CD4-positive, alpha-beta memory T cell (primary cell): ENCODE measurements at regions of chr9 and their contacts with region 1.

Region 1: DNA sequence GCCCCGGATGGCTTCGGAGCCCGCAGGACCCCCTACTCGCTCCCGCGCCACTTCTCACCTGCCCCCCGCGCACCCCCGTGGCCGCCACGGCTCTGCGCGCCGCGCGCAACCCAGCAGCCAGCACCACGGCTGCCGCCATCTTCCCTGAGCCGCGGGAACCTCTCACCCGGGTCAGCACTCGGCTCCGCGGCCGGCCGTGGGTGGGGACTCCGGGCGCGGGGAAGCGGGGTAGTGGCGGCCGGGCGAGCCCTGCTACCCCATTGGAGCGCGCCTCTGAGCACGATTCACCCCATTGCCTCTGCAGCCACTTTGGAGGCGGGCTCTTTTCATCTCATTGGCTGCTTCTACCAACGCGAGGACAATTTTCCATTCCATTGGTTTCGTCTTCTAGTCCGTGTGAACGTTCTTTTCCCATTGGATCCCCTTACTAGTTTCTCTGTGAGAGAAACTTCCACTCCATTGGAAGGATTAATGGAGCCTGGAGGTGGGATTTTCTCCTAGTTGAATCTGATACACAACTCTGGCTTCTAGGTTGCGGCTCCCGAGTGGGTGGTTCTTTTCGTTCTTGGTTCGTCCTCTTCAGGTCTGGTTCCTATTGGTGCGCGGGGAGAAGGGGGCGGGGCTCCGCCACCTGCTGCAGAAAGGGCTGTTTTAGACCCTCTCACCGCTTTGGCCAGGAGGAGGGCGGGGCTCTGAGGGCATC is at the start of gene HINT2:
- DNase-seq: peak; percentile 96 to 99 (median 98)
- H3K4me3 ChIP-seq: peak within 1 kb of the TSS; percentile 95 to 100
- H3K4me3 Mint-ChIP-seq: peak within 1 kb of the TSS; percentile 89 to 98 (median 95)
- H3K27ac ChIP-seq: peak within 1 kb of the TSS; percentile 70
- H3K27ac Mint-ChIP-seq: peak within 1 kb of the TSS; percentile 91 to 98 (median 96)
- H3K4me1 ChIP-seq: peaks cover 34% of the 10 kb centered on the region
- H3K4me1 Mint-ChIP-seq: peaks cover 20 to 50% (median 36%) of the 10 kb centered on the region in 4 donors
- H3K27me3 ChIP-seq: no peaks in the 10 kb centered on the region
- H3K27me3 Mint-ChIP-seq: no peaks in the 10 kb centered on the region
- total RNA-seq, gene HINT2: 22.9 to 30.2 TPM

Region 2: GRCh38 chr9:35071814-35072460 is 743.1 kb before region 1 on chr9:
- CTCF ChIA-PET with region 1: no interaction called
- POLR2A ChIA-PET with region 1: no interaction called
- intact Hi-C with region 1: loop called (anchors 10 kb)
- DNase-seq: peak; percentile 72 to 80 (median 79)
- H3K4me3 ChIP-seq: peak overlapping the region; percentile 82 to 83
- H3K4me3 Mint-ChIP-seq: peak overlapping the region; percentile 81 to 95 (median 92)
- H3K27ac ChIP-seq: peak overlapping the region; percentile 94
- H3K27ac Mint-ChIP-seq: peak overlapping the region; percentile 81 to 100 (median 97)
- H3K4me1 ChIP-seq: peaks cover 52% of the 10 kb centered on the region
- H3K4me1 Mint-ChIP-seq: peaks cover 41 to 59% (median 51%) of the 10 kb centered on the region in 4 donors
- H3K27me3 ChIP-seq: no peaks in the 10 kb centered on the region
- H3K27me3 Mint-ChIP-seq: no peaks in the 10 kb centered on the region

Region 3: DNA sequence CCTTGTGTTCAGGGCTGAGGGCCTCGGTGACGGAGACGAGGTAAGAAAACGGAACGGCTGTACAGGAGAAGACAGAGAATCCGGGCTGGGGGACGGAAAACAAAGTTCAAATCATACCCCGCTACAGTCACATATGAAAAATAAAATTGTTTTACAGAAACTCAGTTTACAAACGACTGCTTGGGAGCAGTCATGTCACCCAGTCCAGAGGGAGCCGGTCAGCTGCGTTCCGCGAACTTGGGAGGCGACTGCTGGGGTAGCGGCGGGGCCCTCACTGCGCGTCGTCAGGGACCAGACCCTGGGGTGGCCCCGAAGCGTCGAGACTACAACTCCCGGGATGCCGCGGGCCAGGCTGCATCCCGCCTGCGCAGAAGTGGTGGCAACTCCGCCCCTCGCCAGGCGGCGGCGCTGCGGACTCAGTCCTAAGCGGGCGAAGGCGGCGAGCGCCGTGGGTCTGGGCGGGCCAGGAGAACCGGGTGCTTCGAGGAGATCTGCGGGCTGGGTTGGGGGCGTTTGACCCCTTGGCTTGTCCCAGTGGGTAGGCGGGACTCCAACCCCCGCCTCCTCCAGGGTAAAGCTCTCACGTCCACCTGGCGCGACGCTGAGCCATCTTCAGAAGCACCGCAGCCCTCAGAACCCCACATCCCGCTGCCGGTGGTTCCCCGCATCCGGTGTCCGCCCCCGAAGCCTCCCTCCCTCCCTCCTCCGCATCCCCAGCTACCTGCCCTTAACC is 168.3 kb before region 1 on chr9:
- CTCF ChIA-PET with region 1: interaction called, 7 read pairs
- POLR2A ChIA-PET with region 1: interaction called, 10 read pairs
- intact Hi-C with region 1: loop called (anchors 1 kb)
- DNase-seq: peak; percentile 91 to 95 (median 91)
- H3K4me3 ChIP-seq: peak overlapping the region; percentile 78 to 96
- H3K4me3 Mint-ChIP-seq: peak overlapping the region; percentile 93 to 98 (median 94)
- H3K27ac ChIP-seq: peak overlapping the region; percentile 88
- H3K27ac Mint-ChIP-seq: peak overlapping the region; percentile 89 to 99 (median 97)
- H3K4me1 ChIP-seq: peaks cover 56% of the 10 kb centered on the region
- H3K4me1 Mint-ChIP-seq: peaks cover 29 to 87% (median 47%) of the 10 kb centered on the region in 4 donors
- H3K27me3 ChIP-seq: no peaks in the 10 kb centered on the region
- H3K27me3 Mint-ChIP-seq: no peaks in the 10 kb centered on the region

Region 4: GRCh38 chr9:35756275-35757225 is 58.4 kb before region 1 on chr9:
- CTCF ChIA-PET with region 1: interaction called, 3 read pairs
- POLR2A ChIA-PET with region 1: interaction called, 12 read pairs
- intact Hi-C with region 1: no loop called
- DNase-seq: peak; percentile 68 to 80 (median 71)
- H3K4me3 ChIP-seq: peak overlapping the region; percentile 62 to 90
- H3K4me3 Mint-ChIP-seq: peak overlapping the region; percentile 97 to 100 (median 98)
- H3K27ac ChIP-seq: peak overlapping the region; percentile 70
- H3K27ac Mint-ChIP-seq: peak overlapping the region; percentile 81 to 99 (median 98)
- H3K4me1 ChIP-seq: peaks cover 22% of the 10 kb centered on the region
- H3K4me1 Mint-ChIP-seq: peaks cover 24 to 67% (median 49%) of the 10 kb centered on the region in 4 donors
- H3K27me3 ChIP-seq: no peaks in the 10 kb centered on the region
- H3K27me3 Mint-ChIP-seq: no peaks in the 10 kb centered on the region

Region 5: DNA sequence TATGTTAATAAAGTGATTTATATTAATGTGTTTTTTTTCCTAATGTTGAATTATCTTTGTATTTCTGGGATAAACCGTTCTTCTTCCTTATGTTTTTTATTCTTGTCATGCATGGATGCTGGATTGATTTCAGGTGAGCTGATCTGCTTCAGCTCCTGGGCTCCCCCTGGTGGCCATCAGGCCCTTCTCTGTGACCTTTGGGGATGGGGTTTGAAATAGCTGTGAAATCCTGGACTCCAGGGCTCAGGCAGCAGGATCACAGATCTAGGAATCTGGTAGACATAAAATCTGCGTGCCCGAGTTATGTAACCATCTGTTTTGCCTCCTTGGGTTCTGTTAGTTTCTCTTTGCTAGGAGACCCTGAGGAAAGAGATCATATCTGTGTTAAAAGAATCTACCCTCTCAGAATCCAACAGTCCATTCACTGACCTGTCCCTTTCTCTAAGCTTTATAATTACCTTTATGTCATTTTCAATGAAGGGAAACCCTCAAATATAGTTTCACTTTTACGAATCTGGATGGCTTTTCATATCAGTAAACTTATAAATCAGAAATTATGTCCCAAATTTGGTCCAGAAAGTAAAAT is 67.4 kb after region 1 on chr9:
- CTCF ChIA-PET with region 1: interaction called, 6 read pairs
- POLR2A ChIA-PET with region 1: interaction called, 4 read pairs
- intact Hi-C with region 1: loop called (anchors 5 kb)
- DNase-seq: peak; percentile 70 to 75 (median 71)
- H3K4me3 ChIP-seq: no peak overlapping the region
- H3K4me3 Mint-ChIP-seq: no peak overlapping the region
- H3K27ac ChIP-seq: no peak overlapping the region
- H3K27ac Mint-ChIP-seq: no peak overlapping the region
- H3K4me1 ChIP-seq: no peaks in the 10 kb centered on the region
- H3K4me1 Mint-ChIP-seq: no peaks in the 10 kb centered on the region
- H3K27me3 ChIP-seq: no peaks in the 10 kb centered on the region
- H3K27me3 Mint-ChIP-seq: peaks cover 2 to 8% of the 10 kb centered on the region in 2 donors

Region 6: GRCh38 chr9:35935755-35936509 is 120.9 kb after region 1 on chr9:
- CTCF ChIA-PET with region 1: no interaction called
- POLR2A ChIA-PET with region 1: no interaction called
- intact Hi-C with region 1: no loop called
- DNase-seq: no peak
- H3K4me3 ChIP-seq: no peak overlapping the region
- H3K4me3 Mint-ChIP-seq: no peak overlapping the region
- H3K27ac ChIP-seq: no peak overlapping the region
- H3K27ac Mint-ChIP-seq: no peak overlapping the region
- H3K4me1 ChIP-seq: peaks cover 49% of the 10 kb centered on the region
- H3K4me1 Mint-ChIP-seq: peaks cover 39 to 57% (median 50%) of the 10 kb centered on the region in 4 donors
- H3K27me3 ChIP-seq: no peaks in the 10 kb centered on the region
- H3K27me3 Mint-ChIP-seq: no peaks in the 10 kb centered on the region